Activated B cell treated with CpG ODN at 0.5 μM for 24 hours (primary cell): ENCODE measurements at regions of chr2 and their contacts with region 1.

Region 1: DNA sequence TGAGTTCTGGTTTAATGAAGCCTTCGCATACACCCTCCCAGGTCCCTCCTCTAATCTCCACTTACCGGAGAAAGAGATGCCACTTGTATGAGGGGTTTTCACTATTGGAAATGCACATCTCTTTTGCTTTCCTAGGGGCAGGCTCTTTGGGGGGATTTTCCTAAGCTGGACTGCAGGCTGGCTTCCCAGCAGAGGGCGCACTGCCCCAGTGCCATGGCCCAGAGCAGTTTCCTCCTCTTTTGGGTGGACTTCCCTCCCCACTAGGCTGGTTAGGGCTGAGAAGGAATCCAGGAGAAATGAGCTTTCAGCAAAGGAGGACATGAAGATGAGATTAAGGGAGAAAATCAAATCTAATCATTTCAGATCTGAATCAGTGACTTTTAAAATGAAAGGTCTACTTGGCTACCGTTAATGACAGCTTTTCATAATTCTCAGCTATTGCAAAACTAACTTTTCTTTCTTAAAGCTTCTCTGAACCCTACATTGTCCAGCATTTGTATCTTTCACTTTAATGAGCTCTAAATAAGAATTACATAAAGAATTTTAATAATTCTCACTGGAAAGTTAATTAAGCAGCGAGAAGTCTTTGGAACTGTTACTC is 784.1 kb upstream of the FANCL start:
- DNase-seq: peak; percentile 50
- ATAC-seq: peak; percentile 54
- H3K4me3 Mint-ChIP-seq: no peak overlapping the region
- H3K27ac Mint-ChIP-seq: no peak overlapping the region
- H3K4me1 Mint-ChIP-seq: peaks cover 2% of the 10 kb centered on the region
- H3K27me3 Mint-ChIP-seq: peaks cover 10% of the 10 kb centered on the region
- CTCF ChIP-seq: peak; percentile 45

Region 2: DNA sequence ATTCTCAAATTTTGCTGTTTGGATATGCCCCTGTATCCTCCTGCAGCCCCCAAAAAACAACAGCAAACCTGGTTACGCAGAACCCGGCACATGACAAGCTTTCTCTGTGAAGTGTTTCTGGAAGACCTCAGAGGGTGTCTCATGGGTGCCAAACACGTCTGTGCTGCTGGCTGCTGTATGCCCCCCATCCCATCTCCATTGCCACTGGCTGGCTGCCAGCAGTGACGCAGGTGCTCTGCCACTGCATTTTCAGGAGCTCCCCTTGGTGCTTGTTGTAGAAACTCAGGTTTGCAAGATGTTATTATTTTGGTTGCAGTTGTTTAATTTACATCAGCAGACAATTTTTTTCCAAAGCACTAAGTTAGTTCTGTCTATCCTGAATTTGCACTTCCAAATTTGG is 617.8 kb before region 1 on chr2:
- CTCF ChIA-PET with region 1: no interaction called
- POLR2A ChIA-PET with region 1: no interaction called
- intact Hi-C with region 1: no loop called
- DNase-seq: no peak
- ATAC-seq: no peak
- H3K4me3 Mint-ChIP-seq: no peak overlapping the region
- H3K27ac Mint-ChIP-seq: no peak overlapping the region
- H3K4me1 Mint-ChIP-seq: no peaks in the 10 kb centered on the region
- H3K27me3 Mint-ChIP-seq: peaks cover 4% of the 10 kb centered on the region
- CTCF ChIP-seq: no peak

Region 3: DNA sequence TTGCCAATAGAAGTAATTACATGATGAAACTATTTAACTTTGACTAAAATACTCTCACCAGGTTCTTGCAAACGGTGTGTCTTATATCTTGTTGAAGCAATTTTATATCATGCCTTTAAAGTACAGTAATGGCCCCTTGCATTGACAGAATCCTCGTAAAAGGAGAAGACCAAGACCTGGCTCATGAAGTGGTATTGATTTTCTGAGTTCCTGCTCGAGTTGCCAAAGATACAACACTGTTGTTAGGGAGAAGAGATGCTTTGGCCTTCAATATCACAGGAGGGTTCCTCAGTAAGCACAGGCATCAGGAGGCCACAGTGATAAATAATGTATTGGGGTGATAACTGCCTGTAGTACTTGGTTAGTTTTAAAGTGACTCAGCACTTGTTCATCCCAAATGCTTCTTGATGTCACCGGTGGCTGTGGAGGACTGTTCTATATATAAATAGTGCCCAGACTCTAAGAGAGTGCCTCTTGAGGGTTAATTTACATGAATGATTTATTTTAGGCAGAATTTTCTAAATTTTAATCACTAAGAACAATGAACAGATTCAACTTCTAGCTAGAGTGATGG is 212.4 kb before region 1 on chr2:
- CTCF ChIA-PET with region 1: no interaction called
- POLR2A ChIA-PET with region 1: no interaction called
- intact Hi-C with region 1: no loop called
- DNase-seq: no peak
- ATAC-seq: no peak
- H3K4me3 Mint-ChIP-seq: no peak overlapping the region
- H3K27ac Mint-ChIP-seq: no peak overlapping the region
- H3K4me1 Mint-ChIP-seq: no peaks in the 10 kb centered on the region
- H3K27me3 Mint-ChIP-seq: no peaks in the 10 kb centered on the region
- CTCF ChIP-seq: no peak

Region 4: DNA sequence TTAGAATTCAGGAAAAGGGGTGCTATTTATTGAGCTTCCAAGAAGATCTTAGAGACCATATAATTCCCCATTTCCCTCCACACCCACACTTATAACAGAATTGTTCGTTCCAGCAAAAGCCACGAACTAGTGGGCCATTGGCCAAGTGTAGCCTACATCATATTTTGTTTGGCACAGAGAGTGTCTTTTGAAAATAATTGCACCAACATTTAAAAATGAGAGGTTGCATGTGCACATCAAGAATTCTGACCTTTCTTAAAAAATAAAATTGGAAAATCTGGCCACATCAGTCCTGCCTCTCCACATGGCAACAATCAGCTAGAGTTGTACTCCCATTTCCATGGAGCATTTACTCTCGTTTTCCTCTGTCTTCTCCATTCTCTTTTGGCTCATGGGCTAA is 128.6 kb before region 1 on chr2:
- CTCF ChIA-PET with region 1: no interaction called
- POLR2A ChIA-PET with region 1: no interaction called
- intact Hi-C with region 1: no loop called
- DNase-seq: no peak
- ATAC-seq: no peak
- H3K4me3 Mint-ChIP-seq: no peak overlapping the region
- H3K27ac Mint-ChIP-seq: no peak overlapping the region
- H3K4me1 Mint-ChIP-seq: no peaks in the 10 kb centered on the region
- H3K27me3 Mint-ChIP-seq: peaks cover 18% of the 10 kb centered on the region
- CTCF ChIP-seq: no peak

Region 5: DNA sequence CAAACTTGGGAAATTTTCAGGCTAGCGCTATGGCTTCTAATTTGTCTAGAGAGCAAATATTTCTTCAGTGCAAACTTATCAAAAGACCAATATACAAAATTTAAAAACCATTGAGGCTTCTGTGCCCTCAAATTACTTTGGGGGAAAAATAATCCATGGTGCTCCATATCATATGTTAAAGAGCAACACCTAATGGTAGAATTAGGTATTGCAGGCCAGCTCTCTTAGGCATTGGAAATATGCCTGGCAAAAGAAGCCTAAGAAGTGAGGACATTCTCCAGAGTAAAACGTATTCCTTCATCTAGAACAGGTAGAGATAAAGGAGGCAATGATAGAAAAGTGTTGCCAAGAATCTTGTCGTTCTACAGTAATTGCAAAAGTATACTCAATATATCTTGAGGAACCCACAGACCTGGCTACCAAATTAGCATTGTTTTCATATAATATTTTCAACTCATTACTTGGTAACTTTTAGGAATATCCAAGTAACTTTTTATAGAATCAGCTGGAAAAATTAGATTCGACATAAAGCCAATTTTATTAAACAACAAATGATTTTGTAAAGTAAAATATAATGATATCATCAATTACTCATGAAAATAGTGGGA is 1127.1 kb after region 1 on chr2:
- CTCF ChIA-PET with region 1: interaction called, 4 read pairs
- POLR2A ChIA-PET with region 1: no interaction called
- intact Hi-C with region 1: loop called (anchors 10 kb)
- DNase-seq: no peak
- ATAC-seq: no peak
- H3K4me3 Mint-ChIP-seq: no peak overlapping the region
- H3K27ac Mint-ChIP-seq: no peak overlapping the region
- H3K4me1 Mint-ChIP-seq: peaks cover 23% of the 10 kb centered on the region
- H3K27me3 Mint-ChIP-seq: no peaks in the 10 kb centered on the region
- CTCF ChIP-seq: no peak

Region 6: GRCh38 chr2:60560734-60561644 is 1535.7 kb after region 1 on chr2:
- CTCF ChIA-PET with region 1: interaction called, 98 read pairs
- POLR2A ChIA-PET with region 1: interaction called, 5 read pairs
- intact Hi-C with region 1: loop called (anchors 1 kb)
- DNase-seq: no peak
- ATAC-seq: peak; percentile 44
- H3K4me3 Mint-ChIP-seq: no peak overlapping the region
- H3K27ac Mint-ChIP-seq: no peak overlapping the region
- H3K4me1 Mint-ChIP-seq: peaks cover 46% of the 10 kb centered on the region
- H3K27me3 Mint-ChIP-seq: no peaks in the 10 kb centered on the region
- CTCF ChIP-seq: peak; percentile 20

Region 7: DNA sequence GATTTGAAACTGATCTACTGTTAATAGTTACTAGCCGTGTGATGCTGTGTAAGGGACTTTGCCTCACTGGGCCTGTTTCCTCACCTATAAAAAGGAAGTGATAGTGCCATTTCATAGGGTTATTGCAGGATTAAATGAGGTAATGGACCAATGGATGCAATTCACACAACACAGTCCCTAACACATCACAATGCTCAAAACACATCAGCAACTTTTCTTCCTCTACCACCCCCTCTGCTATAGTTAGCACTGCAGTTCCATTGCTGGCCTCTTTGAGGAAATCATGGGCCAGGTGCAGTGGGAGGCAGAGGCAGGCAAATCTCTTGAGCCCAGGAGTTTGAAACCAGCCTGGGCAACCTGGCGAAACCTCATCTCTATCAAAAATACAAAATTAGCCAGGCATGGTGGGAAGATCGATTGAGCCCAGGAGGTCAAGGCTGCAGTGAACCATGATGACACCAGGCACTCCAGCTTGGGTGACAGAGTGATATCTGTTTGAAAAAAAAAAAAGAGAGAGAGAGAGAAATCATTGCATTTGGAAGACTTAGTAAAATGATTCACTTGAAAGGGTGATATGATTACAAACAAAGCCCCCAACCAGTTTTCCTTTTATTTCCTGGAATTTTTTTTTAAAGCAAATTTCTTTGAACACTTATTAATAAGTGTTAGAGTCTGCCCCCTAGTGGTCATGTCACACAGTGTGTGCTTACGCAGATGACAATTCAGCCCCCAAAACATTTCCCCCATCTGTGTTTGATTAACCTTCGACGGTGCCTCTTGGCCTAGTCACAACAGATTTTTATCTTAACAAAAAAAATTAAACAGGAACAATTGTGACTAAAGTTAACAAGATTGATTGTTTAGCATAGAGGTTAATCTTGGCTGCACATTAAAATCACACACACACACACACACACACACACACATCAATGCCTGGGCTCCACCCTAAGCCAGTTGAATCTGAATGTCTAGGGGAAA is 1616.8 kb after region 1 on chr2:
- CTCF ChIA-PET with region 1: interaction called, 13 read pairs
- POLR2A ChIA-PET with region 1: interaction called, 3 read pairs
- intact Hi-C with region 1: loop called (anchors 1 kb)
- DNase-seq: no peak
- ATAC-seq: peak; percentile 56
- H3K4me3 Mint-ChIP-seq: no peak overlapping the region
- H3K27ac Mint-ChIP-seq: no peak overlapping the region
- H3K4me1 Mint-ChIP-seq: peaks cover 23% of the 10 kb centered on the region
- H3K27me3 Mint-ChIP-seq: peaks cover 3% of the 10 kb centered on the region
- CTCF ChIP-seq: peak; percentile 34